ENCODE measurements at regions of chr6 and their contacts with region 1.

Region 1: GRCh38 chr6:142301651-142302370 is at the start of gene ADGRG6:
- DNase-seq: peak; percentile 28
- ATAC-seq: peak; percentile 65
- H3K4me3 ChIP-seq: peak within 1 kb of the TSS; percentile 70
- H3K27ac ChIP-seq: peak within 1 kb of the TSS; percentile 64
- H3K4me1 ChIP-seq: peaks cover 3% of the 10 kb centered on the region; the same call in 1 of the 2 replicates
- H3K27me3 ChIP-seq: no peaks in the 10 kb centered on the region
- CTCF ChIP-seq: 0 out of 2 replicates have a peak, but pooled peaks have one; percentile 7
- POLR2A ChIP-seq: no peak
- RAD21 ChIP-seq: no peak
- total RNA-seq, gene ADGRG6: 20.3 and 22.5 TPM in 2 replicates

Region 2: DNA sequence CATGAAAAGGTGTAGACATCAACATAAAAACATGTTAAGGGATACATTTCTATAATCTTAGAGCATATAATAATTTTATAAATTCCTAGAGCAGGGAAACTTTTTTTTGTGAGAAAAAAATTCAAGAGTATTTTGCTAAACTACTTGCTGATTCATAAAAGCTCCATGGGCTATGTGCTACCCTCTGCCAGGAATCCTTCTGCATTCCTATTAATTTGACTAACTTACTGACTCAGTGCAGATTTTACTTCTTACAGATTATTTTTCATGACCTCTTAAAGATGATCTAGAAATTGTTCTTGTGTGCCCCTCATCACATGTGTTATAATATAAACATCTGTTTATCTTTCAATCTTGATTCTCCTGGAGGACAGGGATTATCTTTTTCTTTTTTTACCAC is 149.1 kb before region 1 on chr6:
- CTCF ChIA-PET with region 1: no interaction called
- POLR2A ChIA-PET with region 1: no interaction called
- dilution Hi-C with region 1: no loop called
- in situ Hi-C with region 1: no loop called
- intact Hi-C with region 1: loop called (anchors 5 kb)
- DNase-seq: peak; percentile 82
- ATAC-seq: peak; percentile 88
- H3K4me3 ChIP-seq: no peak overlapping the region
- H3K27ac ChIP-seq: no peak overlapping the region
- H3K4me1 ChIP-seq: peaks cover 6% of the 10 kb centered on the region
- H3K27me3 ChIP-seq: no peaks in the 10 kb centered on the region
- CTCF ChIP-seq: no peak
- POLR2A ChIP-seq: no peak
- RAD21 ChIP-seq: no peak

Region 3: GRCh38 chr6:142236691-142237090 is 65.1 kb before region 1 on chr6:
- CTCF ChIA-PET with region 1: interaction called, 3 read pairs
- POLR2A ChIA-PET with region 1: no interaction called
- dilution Hi-C with region 1: no loop called
- in situ Hi-C with region 1: no loop called
- intact Hi-C with region 1: loop called (anchors 5 kb)
- DNase-seq: no peak
- ATAC-seq: no peak
- H3K4me3 ChIP-seq: no peak overlapping the region
- H3K27ac ChIP-seq: no peak overlapping the region
- H3K4me1 ChIP-seq: no peaks in the 10 kb centered on the region
- H3K27me3 ChIP-seq: no peaks in the 10 kb centered on the region
- CTCF ChIP-seq: no peak
- POLR2A ChIP-seq: no peak
- RAD21 ChIP-seq: no peak

Region 4: GRCh38 chr6:142279350-142280180 is 22.2 kb before region 1 on chr6:
- CTCF ChIA-PET with region 1: no interaction called
- POLR2A ChIA-PET with region 1: no interaction called
- dilution Hi-C with region 1: no loop called
- in situ Hi-C with region 1: no loop called
- intact Hi-C with region 1: no loop called
- DNase-seq: peak; percentile 37
- ATAC-seq: no peak; the same call in 1 of the 2 replicates
- H3K4me3 ChIP-seq: no peak overlapping the region
- H3K27ac ChIP-seq: no peak overlapping the region
- H3K4me1 ChIP-seq: peaks cover 6% of the 10 kb centered on the region
- H3K27me3 ChIP-seq: no peaks in the 10 kb centered on the region
- CTCF ChIP-seq: no peak
- POLR2A ChIP-seq: no peak
- RAD21 ChIP-seq: no peak

Region 5: GRCh38 chr6:142290851-142291250 is 11.0 kb before region 1 on chr6:
- CTCF ChIA-PET with region 1: interaction called, 3 read pairs
- POLR2A ChIA-PET with region 1: interaction called, 18 read pairs
- dilution Hi-C with region 1: no loop called
- in situ Hi-C with region 1: no loop called
- intact Hi-C with region 1: no loop called
- DNase-seq: no peak
- ATAC-seq: no peak
- H3K4me3 ChIP-seq: no peak overlapping the region
- H3K27ac ChIP-seq: no peak overlapping the region
- H3K4me1 ChIP-seq: no peaks in the 10 kb centered on the region
- H3K27me3 ChIP-seq: no peaks in the 10 kb centered on the region
- CTCF ChIP-seq: no peak
- POLR2A ChIP-seq: no peak
- RAD21 ChIP-seq: no peak

Region 6: DNA sequence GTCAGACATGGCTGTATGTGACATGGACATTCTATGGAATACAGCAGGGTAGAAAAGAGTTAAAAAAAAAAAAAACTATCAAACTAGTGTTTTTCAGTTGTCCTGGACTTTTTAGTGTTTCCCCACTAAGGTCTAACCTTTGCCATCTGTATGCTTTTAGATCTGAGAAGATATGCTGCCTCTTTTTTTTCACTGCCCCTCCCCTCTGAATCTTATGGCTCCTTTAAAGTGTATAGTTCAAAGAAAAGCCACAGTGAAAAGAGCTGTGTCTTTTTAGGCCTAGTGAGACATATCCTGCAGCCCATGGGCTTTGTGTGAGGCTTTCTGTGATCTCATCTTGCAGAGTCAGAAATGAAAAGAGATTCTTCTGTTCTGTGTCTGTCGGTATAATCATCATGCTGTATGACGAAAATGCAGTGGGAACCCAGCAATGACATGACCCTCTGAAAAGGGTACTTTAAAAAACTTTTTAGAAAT is 29.3 kb after region 1 on chr6:
- CTCF ChIA-PET with region 1: no interaction called
- POLR2A ChIA-PET with region 1: no interaction called
- dilution Hi-C with region 1: no loop called
- in situ Hi-C with region 1: no loop called
- intact Hi-C with region 1: no loop called
- DNase-seq: peak; percentile 84
- ATAC-seq: peak; percentile 73
- H3K4me3 ChIP-seq: no peak overlapping the region
- H3K27ac ChIP-seq: peak overlapping the region; percentile 37; the same call in 1 of the 2 replicates
- H3K4me1 ChIP-seq: peaks cover 5% of the 10 kb centered on the region
- H3K27me3 ChIP-seq: no peaks in the 10 kb centered on the region
- CTCF ChIP-seq: no peak
- POLR2A ChIP-seq: no peak
- RAD21 ChIP-seq: no peak

Region 7: DNA sequence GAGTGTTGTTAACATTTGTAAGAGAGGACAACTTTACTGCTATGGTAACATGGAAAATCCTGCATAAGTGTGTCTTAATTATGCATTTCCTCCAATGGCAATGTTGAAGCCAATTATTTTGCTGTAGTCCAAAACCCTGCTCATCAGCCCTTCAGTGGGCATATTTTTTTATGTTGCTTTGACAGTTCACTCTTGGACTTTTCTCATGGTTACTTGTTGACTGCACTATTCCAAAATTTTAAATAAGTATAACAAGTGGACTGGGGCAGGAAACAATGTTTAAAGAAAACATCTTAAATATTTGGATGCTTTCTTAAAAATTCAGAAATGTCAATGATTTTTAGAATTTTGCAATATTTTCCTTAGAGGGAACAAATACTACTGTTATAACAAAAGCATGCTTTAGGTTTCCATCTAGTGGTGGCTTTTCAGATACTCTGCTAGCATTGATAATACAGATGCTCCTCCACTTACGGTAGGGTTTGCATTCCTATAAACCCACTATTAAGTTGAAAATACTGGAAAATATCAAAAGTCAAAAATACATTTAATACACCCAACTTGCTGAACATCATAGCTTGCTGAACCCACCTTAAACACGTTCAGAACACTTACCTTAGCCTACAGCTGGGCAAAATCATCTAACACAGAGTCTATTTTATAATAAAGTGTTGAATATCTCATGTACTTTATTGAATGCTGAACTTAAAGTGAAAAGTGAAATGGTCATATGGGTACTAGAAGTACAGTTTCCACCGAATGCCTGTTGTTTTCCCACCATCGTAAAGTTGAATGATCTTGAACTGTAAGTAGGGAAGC is 86.4 kb after region 1 on chr6:
- CTCF ChIA-PET with region 1: interaction called, 4 read pairs
- POLR2A ChIA-PET with region 1: no interaction called
- dilution Hi-C with region 1: no loop called
- in situ Hi-C with region 1: no loop called
- intact Hi-C with region 1: loop called (anchors 1 kb)
- DNase-seq: peak; percentile 74
- ATAC-seq: peak; percentile 97
- H3K4me3 ChIP-seq: no peak overlapping the region
- H3K27ac ChIP-seq: no peak overlapping the region
- H3K4me1 ChIP-seq: peaks cover 5% of the 10 kb centered on the region
- H3K27me3 ChIP-seq: no peaks in the 10 kb centered on the region
- CTCF ChIP-seq: peak; percentile 79
- POLR2A ChIP-seq: no peak
- RAD21 ChIP-seq: peak; percentile 83